ENCODE measurements at regions of chr5 and their contacts with region 1.

Region 1: DNA sequence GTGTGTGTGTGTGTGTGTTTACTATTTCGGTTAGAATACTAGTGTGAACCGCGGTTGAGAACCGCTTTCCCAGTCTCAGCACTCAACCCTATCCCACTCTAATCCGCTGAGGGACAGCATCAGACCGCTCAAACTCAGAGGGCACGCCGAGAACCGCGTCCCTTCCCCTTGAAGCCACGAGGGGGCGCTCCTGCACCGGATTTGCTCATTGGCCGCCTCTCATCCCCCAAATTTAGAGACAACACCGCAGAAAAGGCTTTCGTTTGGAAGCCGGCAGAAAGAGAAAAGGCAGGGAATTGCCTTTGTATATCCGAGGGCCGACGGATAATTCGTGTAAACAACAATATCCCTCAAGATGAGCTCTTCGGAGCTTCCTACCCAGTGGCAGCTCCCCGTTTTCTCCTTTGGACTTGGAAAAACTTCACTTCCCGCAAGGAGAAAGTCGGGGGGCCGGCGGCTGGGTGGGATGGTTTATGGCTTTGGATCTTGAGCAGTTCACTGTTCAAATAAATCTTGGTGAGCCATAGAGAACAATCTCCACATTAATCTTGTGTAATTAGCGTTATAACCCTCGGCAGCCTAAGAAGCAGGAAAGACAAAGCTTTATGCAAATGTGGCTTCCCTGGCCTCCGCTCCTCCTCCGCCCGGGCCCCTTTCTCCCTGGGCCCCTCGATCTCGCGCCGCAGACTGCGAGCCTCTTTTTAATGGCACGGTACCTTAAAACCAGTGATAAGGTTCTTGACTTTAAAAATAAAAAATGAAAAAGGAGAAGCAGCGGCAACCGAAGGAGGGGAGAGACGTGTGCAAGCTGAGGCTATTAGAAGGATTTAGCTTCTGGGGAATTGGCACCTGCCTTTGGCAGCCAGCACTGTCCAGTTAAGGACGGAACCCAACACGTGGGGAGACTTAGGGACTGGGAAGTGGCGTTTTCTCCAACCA is 296.8 kb downstream of the PARP8 start:
- DNase-seq: peak; percentile 83
- H3K4me3 ChIP-seq: peak overlapping the region; percentile 30 to 52 (median 46)
- H3K27ac ChIP-seq: peak overlapping the region in 1 of 4 donors; percentile 36
- H3K4me1 ChIP-seq: peaks cover 0 to 19% (median 12%) of the 10 kb centered on the region in 4 donors
- H3K27me3 ChIP-seq: peaks cover 12 to 71% (median 19%) of the 10 kb centered on the region in 3 donors
- CTCF ChIP-seq: peak; percentile 70 to 88 (median 84)
- EP300 ChIP-seq: no peak
- POLR2A ChIP-seq: no peak

Region 2: DNA sequence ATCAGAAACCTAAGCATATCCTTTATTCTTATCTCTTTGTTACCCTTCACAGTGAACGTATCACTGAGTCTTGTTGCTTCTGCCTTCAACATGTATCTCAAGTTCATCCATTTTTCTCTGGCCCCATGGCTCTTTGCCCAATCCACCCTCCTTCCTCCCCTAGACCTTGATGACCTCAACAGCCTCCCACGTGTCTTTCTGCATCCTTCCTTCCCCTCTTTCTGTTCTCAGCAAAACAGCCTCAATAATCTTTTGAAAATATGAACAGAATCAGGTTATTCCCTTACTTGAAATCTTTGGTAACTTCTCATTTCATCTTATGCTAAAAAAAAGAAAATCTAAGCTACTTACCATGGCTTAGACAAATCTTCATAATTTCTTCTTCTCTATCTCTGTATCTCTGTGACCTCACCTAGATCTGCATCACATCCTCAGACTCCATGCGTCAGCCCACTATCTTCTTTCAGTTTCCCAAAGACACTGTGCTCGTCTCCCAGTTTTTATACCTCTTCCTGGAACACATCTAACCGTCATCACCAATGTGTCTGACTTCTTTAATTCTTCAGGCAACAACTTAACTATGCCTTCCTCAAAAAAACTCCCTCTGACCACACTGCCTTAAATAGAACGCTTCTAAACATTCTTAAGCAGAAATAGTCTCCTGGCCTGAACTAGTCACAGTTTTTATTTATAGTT is 88.7 kb before region 1 on chr5:
- intact Hi-C with region 1: no loop called
- DNase-seq: no peak
- H3K4me3 ChIP-seq: no peak overlapping the region
- H3K27ac ChIP-seq: peak overlapping the region in 2 of 4 donors; percentile 14 to 23
- H3K4me1 ChIP-seq: no peaks in the 10 kb centered on the region
- H3K27me3 ChIP-seq: no peaks in the 10 kb centered on the region
- CTCF ChIP-seq: no peak
- EP300 ChIP-seq: peak in 1 of 4 donors; percentile 27
- POLR2A ChIP-seq: no peak

Region 3: DNA sequence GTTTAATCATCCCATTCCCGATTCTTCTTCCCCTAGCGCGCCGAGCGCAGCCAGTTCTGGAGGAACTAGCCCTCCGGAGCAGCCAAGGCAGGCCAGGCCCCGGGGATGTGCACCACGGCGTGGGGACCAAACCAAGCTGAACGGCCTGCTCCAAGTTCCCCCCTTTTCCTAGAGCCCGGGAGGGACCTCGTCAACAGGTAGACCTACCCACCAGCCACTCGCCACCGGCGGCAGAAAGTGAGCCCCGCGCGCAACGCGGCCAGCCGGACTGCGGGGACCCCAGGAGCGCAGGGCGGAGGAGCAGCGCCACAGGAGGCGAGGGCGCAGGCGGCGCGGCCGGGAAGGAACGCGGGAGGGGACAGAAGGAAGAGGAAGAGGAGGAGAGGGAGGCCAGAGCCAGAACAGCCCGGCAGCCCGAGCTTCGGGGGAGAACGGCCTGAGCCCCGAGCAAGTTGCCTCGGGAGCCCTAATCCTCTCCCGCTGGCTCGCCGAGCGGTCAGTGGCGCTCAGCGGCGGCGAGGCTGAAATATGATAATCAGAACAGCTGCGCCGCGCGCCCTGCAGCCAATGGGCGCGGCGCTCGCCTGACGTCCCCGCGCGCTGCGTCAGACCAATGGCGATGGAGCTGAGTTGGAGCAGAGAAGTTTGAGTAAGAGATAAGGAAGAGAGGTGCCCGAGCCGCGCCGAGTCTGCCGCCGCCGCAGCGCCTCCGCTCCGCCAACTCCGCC is 419.7 kb after region 1 on chr5 and contains the start of gene ISL1:
- intact Hi-C with region 1: loop called (anchors 10 kb)
- DNase-seq: peak; percentile 90
- H3K4me3 ChIP-seq: peak within 1 kb of the TSS; percentile 52 to 68 (median 56)
- H3K27ac ChIP-seq: peak within 1 kb of the TSS in 3 of 4 donors; percentile 69 to 86 (median 83)
- H3K4me1 ChIP-seq: peaks cover 0 to 21% (median 10%) of the 10 kb centered on the region in 4 donors
- H3K27me3 ChIP-seq: peaks cover 0 to 95% (median 10%) of the 10 kb centered on the region in 3 donors
- CTCF ChIP-seq: no peak
- EP300 ChIP-seq: no peak
- POLR2A ChIP-seq: peak; percentile 72 to 84
- total RNA-seq, gene ISL1: 0.81 to 1.2 (median 1.1) TPM

Region 4: GRCh38 chr5:52007230-52007858 is 1044.1 kb after region 1 on chr5:
- intact Hi-C with region 1: loop called (anchors 5 kb)
- DNase-seq: no peak
- H3K4me3 ChIP-seq: no peak overlapping the region
- H3K27ac ChIP-seq: no peak overlapping the region
- H3K4me1 ChIP-seq: no peaks in the 10 kb centered on the region
- H3K27me3 ChIP-seq: no peaks in the 10 kb centered on the region
- CTCF ChIP-seq: peak in 3 of 4 experiments; percentile 27 to 48 (median 36)
- EP300 ChIP-seq: no peak
- POLR2A ChIP-seq: no peak

Region 5: DNA sequence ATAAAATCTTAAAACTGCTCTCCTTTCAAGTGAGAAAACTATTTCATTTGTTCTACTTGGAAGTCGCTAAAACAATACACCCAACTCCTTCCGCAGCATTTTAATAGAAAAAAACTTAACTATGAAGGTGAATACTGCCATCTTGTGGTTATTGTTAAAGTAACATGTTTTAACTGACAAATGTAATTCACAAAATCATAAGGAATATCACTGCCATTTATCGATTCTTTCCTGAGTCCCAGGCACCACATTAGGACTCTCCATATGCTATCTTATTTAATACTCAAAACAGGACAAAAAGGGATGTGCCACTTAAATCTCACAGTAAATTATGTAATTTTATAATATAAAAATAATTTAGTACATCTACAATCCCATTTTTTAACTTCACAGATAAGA is 1694.0 kb after region 1 on chr5:
- intact Hi-C with region 1: loop called (anchors 2 kb)
- DNase-seq: no peak
- H3K4me3 ChIP-seq: no peak overlapping the region
- H3K27ac ChIP-seq: no peak overlapping the region
- H3K4me1 ChIP-seq: no peaks in the 10 kb centered on the region
- H3K27me3 ChIP-seq: no peaks in the 10 kb centered on the region
- CTCF ChIP-seq: peak in 3 of 4 experiments; percentile 36 to 56 (median 42)
- EP300 ChIP-seq: no peak
- POLR2A ChIP-seq: no peak